HepG2 (cell line): ENCODE measurements at regions of chr11 and their contacts with region 1.

Region 1: GRCh38 chr11:83071567-83072349 is at the start of gene RAB30:
- DNase-seq: peak; percentile 100
- ATAC-seq: peak; percentile 98
- H3K4me3 ChIP-seq: peak within 1 kb of the TSS; percentile 82 to 92 (median 89)
- H3K27ac ChIP-seq: peak within 1 kb of the TSS; percentile 88
- H3K4me1 ChIP-seq: peaks cover 60% of the 10 kb centered on the region
- H3K27me3 ChIP-seq: no peaks in the 10 kb centered on the region; a peak in 1 of 5 replicates
- CTCF ChIP-seq: peak; percentile 20; the same call in 1 of the 2 replicates
- EP300 ChIP-seq: peak; percentile 43 to 59; a peak in 3 of 4 replicates
- POLR2A ChIP-seq: peak; percentile 88 to 91
- RAD21 ChIP-seq: peak; percentile 6; the same call in 1 of the 2 replicates
- total RNA-seq, gene RAB30: 5.0 and 8.8 TPM in 2 replicates

Region 2: DNA sequence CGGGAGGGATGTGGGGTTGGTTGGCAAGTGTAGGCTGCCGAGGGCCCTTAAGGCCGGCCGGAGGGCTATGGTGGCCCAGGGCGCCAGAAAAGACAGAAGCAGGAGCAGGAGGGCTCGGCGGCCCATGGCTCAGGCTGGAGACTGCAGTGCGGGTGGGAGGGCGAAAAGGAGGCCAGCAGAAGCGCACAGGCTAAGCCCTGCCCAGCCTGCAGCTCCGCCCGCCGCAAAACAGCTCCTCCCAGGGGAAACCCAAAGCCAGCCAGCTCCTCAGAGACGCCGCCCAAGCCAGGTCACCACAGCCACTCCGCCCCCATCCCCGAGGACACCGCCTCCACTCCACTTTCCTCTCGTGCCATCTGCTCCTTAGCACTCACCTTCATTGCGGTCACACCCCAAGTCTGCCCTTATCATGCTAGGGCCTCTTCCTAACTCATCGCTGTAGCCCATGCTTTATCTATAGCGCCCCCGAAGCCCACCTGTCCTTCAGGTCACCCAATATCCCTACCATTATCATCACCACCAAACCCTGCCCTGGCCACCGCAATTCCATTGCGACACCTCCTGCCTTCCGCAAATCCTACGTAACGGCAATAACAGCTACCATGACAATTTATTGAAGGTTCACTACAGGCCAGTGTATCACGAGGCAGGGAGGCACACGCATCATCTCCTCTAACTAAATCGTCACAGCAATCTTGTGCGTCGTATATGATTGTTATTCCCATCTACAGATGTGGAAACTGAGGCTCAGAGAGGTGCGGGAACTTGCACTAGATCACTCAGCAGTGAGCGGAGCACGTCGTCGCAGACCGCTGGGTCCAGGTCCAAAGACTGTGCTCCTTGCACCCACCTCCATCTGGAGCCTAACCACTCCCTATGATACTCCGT is 171.2 kb before region 1 on chr11 and contains the start of gene PRCP:
- CTCF ChIA-PET with region 1: no interaction called
- POLR2A ChIA-PET with region 1: interaction called, 7 read pairs
- in situ Hi-C with region 1: loop called (anchors 5 kb)
- intact Hi-C with region 1: loop called (anchors 1 kb)
- DNase-seq: peak; percentile 81
- ATAC-seq: peak; percentile 95
- H3K4me3 ChIP-seq: peak within 1 kb of the TSS; percentile 87 to 96 (median 94)
- H3K27ac ChIP-seq: peak within 1 kb of the TSS; percentile 82
- H3K4me1 ChIP-seq: peaks cover 34% of the 10 kb centered on the region
- H3K27me3 ChIP-seq: no peaks in the 10 kb centered on the region; a peak in 1 of 5 replicates
- CTCF ChIP-seq: peak; percentile 42; the same call in 1 of the 2 replicates
- EP300 ChIP-seq: no peak
- POLR2A ChIP-seq: peak; percentile 82 to 90
- RAD21 ChIP-seq: peak; percentile 44; the same call in 1 of the 2 replicates
- total RNA-seq, gene PRCP: 49.9 and 84.2 TPM in 2 replicates

Region 3: GRCh38 chr11:82988936-82989627 is 82.7 kb before region 1 on chr11:
- CTCF ChIA-PET with region 1: no interaction called
- POLR2A ChIA-PET with region 1: interaction called, 8 read pairs
- in situ Hi-C with region 1: no loop called
- intact Hi-C with region 1: loop called (anchors 1 kb)
- DNase-seq: peak; percentile 96
- ATAC-seq: peak; percentile 99
- H3K4me3 ChIP-seq: peak overlapping the region; percentile 20 to 53 (median 22); a peak in 4 of 6 replicates
- H3K27ac ChIP-seq: peak overlapping the region; percentile 82
- H3K4me1 ChIP-seq: peaks cover 44% of the 10 kb centered on the region
- H3K27me3 ChIP-seq: no peaks in the 10 kb centered on the region
- CTCF ChIP-seq: peak; percentile 14; the same call in 1 of the 2 replicates
- EP300 ChIP-seq: peak; percentile 62 to 74; a peak in 3 of 4 replicates
- POLR2A ChIP-seq: no peak
- RAD21 ChIP-seq: peak; percentile 34; the same call in 1 of the 2 replicates

Region 4: GRCh38 chr11:83033972-83034672 is 37.6 kb before region 1 on chr11:
- CTCF ChIA-PET with region 1: no interaction called
- POLR2A ChIA-PET with region 1: interaction called, 10 read pairs
- in situ Hi-C with region 1: no loop called
- intact Hi-C with region 1: no loop called
- DNase-seq: no peak
- ATAC-seq: peak; percentile 75
- H3K4me3 ChIP-seq: 0 out of 6 replicates have a peak overlapping the region, but pooled peaks of 1 of the 3 experiments have one; percentile 27
- H3K27ac ChIP-seq: peak overlapping the region; percentile 19
- H3K4me1 ChIP-seq: peaks cover 39% of the 10 kb centered on the region
- H3K27me3 ChIP-seq: no peaks in the 10 kb centered on the region
- CTCF ChIP-seq: no peak
- EP300 ChIP-seq: no peak
- POLR2A ChIP-seq: no peak
- RAD21 ChIP-seq: no peak

Region 5: GRCh38 chr11:83092488-83093384 is 21.0 kb after region 1 on chr11:
- CTCF ChIA-PET with region 1: no interaction called
- POLR2A ChIA-PET with region 1: interaction called, 29 read pairs
- in situ Hi-C with region 1: no loop called
- intact Hi-C with region 1: no loop called
- DNase-seq: peak; percentile 98
- ATAC-seq: peak; percentile 97
- H3K4me3 ChIP-seq: peak overlapping the region in 2 of 3 experiments; percentile 0 to 33; a peak in 1 of 6 replicates
- H3K27ac ChIP-seq: peak overlapping the region; percentile 90
- H3K4me1 ChIP-seq: peaks cover 32% of the 10 kb centered on the region
- H3K27me3 ChIP-seq: no peaks in the 10 kb centered on the region
- CTCF ChIP-seq: no peak
- EP300 ChIP-seq: peak in 1 of 2 experiments; percentile 91; a peak in 2 of 4 replicates
- POLR2A ChIP-seq: peak; percentile 31 to 41; a peak in 2 of 4 replicates
- RAD21 ChIP-seq: peak; percentile 40; the same call in 1 of the 2 replicates